Upper lobe of right lung (tissue), 1 donor: ENCODE measurements at regions of chr16 and their contacts with region 1.

Region 1: GRCh38 chr16:21584817-21585216 is 14.6 kb upstream of the METTL9 start:
- DNase-seq: no peak
- ATAC-seq: no peak
- H3K4me3 ChIP-seq: no peak overlapping the region
- H3K27ac ChIP-seq: no peak overlapping the region
- H3K4me1 ChIP-seq: peaks cover 6% of the 10 kb centered on the region
- H3K27me3 ChIP-seq: no peaks in the 10 kb centered on the region
- CTCF ChIP-seq: no peak

Region 2: DNA sequence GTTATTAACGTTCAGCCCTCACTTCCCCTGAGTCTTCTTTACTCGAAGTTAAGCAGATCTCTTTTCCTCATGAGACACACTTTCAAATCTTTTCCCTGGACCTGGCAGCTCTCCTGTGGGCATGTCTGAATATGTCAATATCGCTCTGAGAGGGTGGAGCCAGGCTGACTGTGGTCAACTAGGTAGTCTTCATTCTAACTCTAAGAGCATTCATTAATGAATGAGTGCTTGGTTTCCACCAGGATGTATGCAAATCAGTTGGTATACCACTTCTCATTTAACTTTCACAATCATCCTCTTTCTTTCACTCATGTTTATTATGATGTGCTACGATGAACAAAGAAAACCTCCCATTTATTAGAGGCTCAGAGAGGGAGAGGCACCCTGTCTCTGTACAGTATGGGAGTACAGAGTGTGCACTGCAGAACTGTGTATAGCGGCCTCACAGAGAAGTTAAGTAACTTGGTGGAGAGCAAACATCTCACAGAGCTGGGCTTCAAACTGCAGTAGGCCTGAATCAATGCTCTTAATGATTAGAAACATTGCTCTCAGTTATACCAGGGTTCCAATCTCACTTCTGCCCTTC is 118.9 kb after region 1 on chr16:
- intact Hi-C with region 1: loop called (anchors 5 kb)
- DNase-seq: no peak
- ATAC-seq: no peak
- H3K4me3 ChIP-seq: no peak overlapping the region
- H3K27ac ChIP-seq: no peak overlapping the region
- H3K4me1 ChIP-seq: no peaks in the 10 kb centered on the region
- H3K27me3 ChIP-seq: peaks cover 6% of the 10 kb centered on the region
- CTCF ChIP-seq: no peak